ENCODE measurements at regions of chr17 and their contacts with region 1.

Region 1: DNA sequence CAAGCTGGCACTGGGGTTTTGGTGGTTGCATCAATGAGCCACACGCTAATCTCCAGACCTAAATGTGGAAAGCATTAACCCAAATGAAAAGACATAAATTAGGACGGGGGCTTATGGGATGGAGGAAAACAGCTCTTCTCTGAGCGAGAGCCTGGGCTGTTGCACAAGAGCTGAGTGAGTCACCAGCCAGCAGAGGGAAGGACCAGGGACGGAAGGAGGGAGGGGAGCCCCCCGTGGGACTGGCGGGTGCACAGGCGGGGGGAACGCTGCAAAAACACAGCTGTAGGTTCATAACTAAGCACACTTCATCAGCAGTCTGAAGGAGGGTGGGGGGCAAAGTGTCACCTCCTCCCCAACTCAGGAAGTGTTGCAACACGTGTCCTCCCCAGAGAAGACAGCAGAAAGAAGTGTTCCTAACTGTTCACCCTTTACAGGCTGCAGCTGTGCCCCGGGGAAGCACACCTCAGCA is 83.3 kb downstream of the GAS7 start:
- DNase-seq: peak; percentile 91 to 96 (median 94)
- ATAC-seq: peak; percentile 77 to 91 (median 91)
- H3K4me3 ChIP-seq: peak overlapping the region in 10 of 12 donors; percentile 3 to 45 (median 28)
- H3K27ac ChIP-seq: peak overlapping the region; percentile 72 to 96 (median 92)
- H3K4me1 ChIP-seq: peaks cover 0 to 81% (median 45%) of the 10 kb centered on the region in 12 donors
- H3K27me3 ChIP-seq: no peaks in the 10 kb centered on the region
- CTCF ChIP-seq: no peak
- POLR2A ChIP-seq: no peak

Region 2: DNA sequence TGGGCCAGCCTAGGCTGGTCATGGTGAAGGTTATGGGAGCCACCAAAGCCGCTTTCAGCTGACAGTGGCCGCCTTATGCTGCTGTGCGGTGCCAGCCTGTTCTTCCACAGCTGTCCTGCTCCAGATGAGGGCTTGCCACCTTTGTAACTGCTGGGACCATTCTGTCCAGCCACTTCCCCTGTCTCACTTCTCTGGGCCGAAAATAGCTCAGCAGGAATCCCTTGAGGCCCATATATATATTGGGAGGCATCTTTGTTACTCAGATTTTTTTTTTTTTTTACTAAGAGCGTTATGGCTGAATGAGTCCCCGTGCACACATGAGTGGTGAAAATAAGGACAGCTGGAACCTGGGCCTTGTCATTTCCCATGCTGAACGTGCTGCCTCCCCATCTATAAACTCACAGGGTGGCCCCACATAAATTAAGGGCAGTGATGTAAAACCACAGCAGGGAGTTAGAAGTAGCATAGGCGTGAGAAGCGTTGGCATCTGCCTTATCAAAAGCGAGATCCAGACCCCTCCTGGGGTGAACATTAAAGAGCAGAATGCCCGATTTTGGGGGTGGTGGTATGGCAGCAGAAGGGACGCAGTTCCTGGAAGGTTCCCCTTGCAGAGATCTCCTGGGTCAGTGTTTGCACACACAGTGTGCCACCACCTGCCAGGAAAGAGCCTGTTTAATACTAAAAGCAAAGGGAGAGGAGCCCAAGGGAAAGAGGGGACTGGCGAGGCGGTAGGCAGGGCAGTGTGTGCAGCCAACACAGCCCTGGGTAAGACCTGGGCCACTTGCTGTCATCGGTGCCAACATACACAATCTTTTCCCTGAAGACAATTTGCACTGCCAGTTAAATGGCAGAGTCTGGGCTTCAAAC is 412.0 kb before region 1 on chr17:
- intact Hi-C with region 1: no loop called
- DNase-seq: no peak
- ATAC-seq: no peak
- H3K4me3 ChIP-seq: no peak overlapping the region
- H3K27ac ChIP-seq: no peak overlapping the region
- H3K4me1 ChIP-seq: no peaks in the 10 kb centered on the region
- H3K27me3 ChIP-seq: peaks cover 0 to 2% (median 0%) of the 10 kb centered on the region in 9 donors
- CTCF ChIP-seq: no peak
- POLR2A ChIP-seq: no peak

Region 3: DNA sequence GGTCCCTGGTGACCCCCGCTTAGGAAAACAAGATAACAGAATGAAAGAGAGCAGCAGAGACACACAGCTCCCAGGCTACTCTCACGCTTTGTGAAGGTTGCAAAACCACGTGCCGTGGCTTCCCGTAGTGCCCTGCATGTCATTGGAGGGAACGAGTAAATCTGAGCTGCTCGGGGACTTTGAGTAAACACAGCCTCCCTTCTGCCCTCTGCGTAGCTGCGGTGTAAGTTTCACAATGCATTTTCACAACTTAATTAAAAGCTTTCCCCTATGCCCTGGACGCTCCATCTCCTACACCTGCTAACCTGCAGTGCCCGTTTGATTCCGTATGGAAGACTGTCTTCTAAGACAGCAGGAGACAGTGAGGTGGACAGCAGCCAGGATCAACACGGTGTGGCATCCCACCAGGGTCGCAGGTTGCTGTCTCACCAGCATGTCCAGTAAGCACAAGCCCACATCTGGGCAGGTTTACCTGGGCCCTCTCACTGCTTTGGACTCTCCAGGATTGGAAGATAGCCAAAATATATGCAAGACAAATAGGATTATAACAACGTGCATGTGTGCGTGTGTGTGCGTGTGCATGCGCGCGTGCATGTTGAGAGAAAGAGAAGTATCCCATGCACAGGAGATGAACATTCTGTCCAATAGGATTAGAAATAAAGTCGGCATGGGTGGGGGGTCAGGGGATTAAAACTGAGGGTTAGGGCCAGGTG is 93.7 kb before region 1 on chr17:
- intact Hi-C with region 1: loop called in 1 of 10 experiments (anchors 5 kb)
- DNase-seq: peak in 3 of 5 donors; percentile 50 to 75 (median 54)
- ATAC-seq: peak in 3 of 4 donors; percentile 23 to 52 (median 32)
- H3K4me3 ChIP-seq: no peak overlapping the region
- H3K27ac ChIP-seq: peak overlapping the region in 1 of 12 donors; percentile 42
- H3K4me1 ChIP-seq: peaks cover 0 to 86% (median 17%) of the 10 kb centered on the region in 12 donors
- H3K27me3 ChIP-seq: no peaks in the 10 kb centered on the region
- CTCF ChIP-seq: no peak
- POLR2A ChIP-seq: no peak

Region 4: GRCh38 chr17:10172241-10172741 is 57.2 kb after region 1 on chr17:
- intact Hi-C with region 1: no loop called
- DNase-seq: no peak
- ATAC-seq: peak in 3 of 4 donors; percentile 35 to 53 (median 38)
- H3K4me3 ChIP-seq: peak overlapping the region in 1 of 12 donors; percentile 22
- H3K27ac ChIP-seq: peak overlapping the region in 2 of 12 donors; percentile 46 to 88
- H3K4me1 ChIP-seq: peaks cover 0 to 61% (median 14%) of the 10 kb centered on the region in 12 donors
- H3K27me3 ChIP-seq: peaks cover 0 to 5% (median 0%) of the 10 kb centered on the region in 9 donors
- CTCF ChIP-seq: no peak
- POLR2A ChIP-seq: no peak

Region 5: GRCh38 chr17:10198509-10199253 is 83.6 kb after region 1 on chr17 and contains the start of gene GAS7:
- intact Hi-C with region 1: loop called in 4 of 10 experiments (anchors 5 to 10 kb)
- DNase-seq: peak; percentile 78 to 88 (median 80)
- ATAC-seq: peak; percentile 5 to 86 (median 66)
- H3K4me3 ChIP-seq: peak within 1 kb of the TSS; percentile 64 to 84 (median 72)
- H3K27ac ChIP-seq: peak within 1 kb of the TSS in 11 of 12 donors; percentile 9 to 84 (median 52)
- H3K4me1 ChIP-seq: peaks cover 0 to 25% (median 5%) of the 10 kb centered on the region in 12 donors
- H3K27me3 ChIP-seq: peaks cover 0 to 16% (median 3%) of the 10 kb centered on the region in 9 donors
- CTCF ChIP-seq: no peak
- POLR2A ChIP-seq: peak in 1 of 2 donors; percentile 20
- total RNA-seq, gene GAS7: 34.5 to 86.5 (median 65.4) TPM

Region 6: GRCh38 chr17:10295728-10296343 is 180.7 kb after region 1 on chr17:
- intact Hi-C with region 1: loop called in 1 of 10 experiments (anchors 5 kb)
- DNase-seq: peak in 3 of 5 donors; percentile 27 to 48 (median 37)
- ATAC-seq: peak in 3 of 4 donors; percentile 34 to 62 (median 59)
- H3K4me3 ChIP-seq: no peak overlapping the region
- H3K27ac ChIP-seq: no peak overlapping the region
- H3K4me1 ChIP-seq: peaks cover 0 to 10% (median 0%) of the 10 kb centered on the region in 12 donors
- H3K27me3 ChIP-seq: peaks cover 0 to 10% (median 0%) of the 10 kb centered on the region in 9 donors
- CTCF ChIP-seq: peak; percentile 36 to 66 (median 58)
- POLR2A ChIP-seq: no peak

Measured in heart left ventricle (tissue), 16 donors.